Caco-2 (cell line): ENCODE measurements at regions of chr5 and their contacts with region 1.

Region 1: DNA sequence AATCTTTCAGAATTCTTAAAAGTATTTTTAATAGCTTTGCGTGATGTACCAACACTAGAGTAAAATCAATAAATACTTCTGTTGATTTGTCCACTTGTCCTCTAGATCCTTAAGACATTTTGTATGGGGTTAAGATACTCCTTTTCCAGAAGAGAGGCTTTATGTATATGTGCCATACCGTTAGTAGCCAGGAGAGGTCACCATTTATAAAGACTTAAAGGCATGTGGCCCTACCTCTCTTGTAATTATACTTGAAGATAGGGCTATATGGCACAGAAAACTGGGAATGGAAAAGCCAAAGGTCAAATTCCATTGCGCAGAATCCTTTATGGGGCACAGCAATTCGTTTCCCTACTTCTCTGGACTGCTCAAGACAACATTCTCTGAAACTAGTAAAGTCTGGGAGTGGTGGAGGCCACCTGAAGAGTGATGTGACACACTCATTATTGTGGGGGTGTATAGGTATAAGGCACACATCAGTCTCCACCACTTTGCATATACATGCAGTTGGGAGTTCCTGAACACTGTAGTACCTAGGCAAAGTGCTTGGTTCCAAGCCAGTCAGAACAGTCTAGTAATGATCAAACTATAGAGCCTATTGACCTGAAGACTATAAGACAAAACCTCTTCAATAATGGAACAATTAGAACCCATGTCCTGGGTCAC is 140.1 kb upstream of the FBXL17 start:
- DNase-seq: peak in 1 of 2 experiments; percentile 66
- H3K4me3 ChIP-seq: no peak overlapping the region
- H3K4me3 Mint-ChIP-seq: no peak overlapping the region
- H3K27ac Mint-ChIP-seq: no peak overlapping the region
- H3K4me1 ChIP-seq: peaks cover 8% of the 10 kb centered on the region
- H3K4me1 Mint-ChIP-seq: peaks cover 12% of the 10 kb centered on the region
- H3K27me3 ChIP-seq: no peaks in the 10 kb centered on the region
- H3K27me3 Mint-ChIP-seq: no peaks in the 10 kb centered on the region
- CTCF ChIP-seq: peak; percentile 71

Region 2: DNA sequence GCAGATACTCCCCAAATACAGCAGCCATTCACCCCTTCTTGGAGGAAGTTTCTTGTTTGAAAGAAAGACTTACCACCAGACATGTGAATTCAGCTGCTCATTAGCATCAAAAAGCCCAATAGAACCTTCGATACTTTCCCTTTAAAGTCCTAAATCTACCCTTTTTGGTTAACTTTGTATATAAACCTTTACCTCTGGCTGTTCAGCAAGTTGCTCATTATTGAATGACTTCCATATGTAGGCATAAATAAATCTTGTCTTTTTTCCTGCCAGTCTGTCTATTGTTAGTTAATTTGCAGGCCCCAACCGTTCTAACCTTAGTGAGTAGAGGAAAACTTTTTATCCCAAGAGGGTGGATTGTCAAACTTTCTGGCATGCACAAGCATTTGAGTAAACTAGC is 112.2 kb before region 1 on chr5:
- CTCF ChIA-PET with region 1: interaction called, 10 read pairs
- POLR2A ChIA-PET with region 1: no interaction called
- intact Hi-C with region 1: no loop called
- DNase-seq: no peak
- H3K4me3 ChIP-seq: no peak overlapping the region
- H3K4me3 Mint-ChIP-seq: no peak overlapping the region
- H3K27ac Mint-ChIP-seq: no peak overlapping the region
- H3K4me1 ChIP-seq: no peaks in the 10 kb centered on the region
- H3K4me1 Mint-ChIP-seq: no peaks in the 10 kb centered on the region
- H3K27me3 ChIP-seq: no peaks in the 10 kb centered on the region
- H3K27me3 Mint-ChIP-seq: no peaks in the 10 kb centered on the region
- CTCF ChIP-seq: no peak

Region 3: DNA sequence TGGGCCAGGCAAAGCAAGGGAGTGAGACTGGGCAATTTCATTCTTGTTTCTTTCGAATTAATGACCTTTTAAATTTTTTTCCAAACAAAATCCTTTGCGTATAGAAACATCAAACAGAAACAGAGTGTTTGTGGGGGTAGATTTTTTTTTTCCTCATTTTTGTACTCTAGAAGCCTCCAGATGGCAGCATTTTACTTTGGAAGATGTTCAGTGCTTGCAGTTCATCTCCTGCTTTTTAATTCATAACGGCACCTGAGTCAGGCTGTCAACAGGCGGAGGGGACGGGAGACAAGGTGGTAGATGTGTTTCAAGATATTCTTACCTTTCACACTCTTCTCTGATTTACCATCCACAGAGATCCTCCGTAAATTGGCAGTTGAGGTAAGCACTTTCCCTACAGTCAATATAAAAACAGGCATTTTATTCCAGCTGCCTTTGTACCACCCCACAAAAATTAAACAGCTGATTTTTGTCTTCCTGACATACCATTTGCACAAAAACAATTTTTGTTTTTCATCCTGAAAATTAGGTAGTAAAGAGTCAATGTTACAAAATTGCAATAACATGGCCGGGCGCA is 40.5 kb before region 1 on chr5:
- CTCF ChIA-PET with region 1: no interaction called
- POLR2A ChIA-PET with region 1: no interaction called
- intact Hi-C with region 1: loop called (anchors 1 kb)
- DNase-seq: peak; percentile 35 to 51
- H3K4me3 ChIP-seq: no peak overlapping the region
- H3K4me3 Mint-ChIP-seq: no peak overlapping the region
- H3K27ac Mint-ChIP-seq: no peak overlapping the region
- H3K4me1 ChIP-seq: no peaks in the 10 kb centered on the region
- H3K4me1 Mint-ChIP-seq: no peaks in the 10 kb centered on the region
- H3K27me3 ChIP-seq: no peaks in the 10 kb centered on the region
- H3K27me3 Mint-ChIP-seq: peaks cover 10% of the 10 kb centered on the region
- CTCF ChIP-seq: peak; percentile 44 to 51

Region 4: DNA sequence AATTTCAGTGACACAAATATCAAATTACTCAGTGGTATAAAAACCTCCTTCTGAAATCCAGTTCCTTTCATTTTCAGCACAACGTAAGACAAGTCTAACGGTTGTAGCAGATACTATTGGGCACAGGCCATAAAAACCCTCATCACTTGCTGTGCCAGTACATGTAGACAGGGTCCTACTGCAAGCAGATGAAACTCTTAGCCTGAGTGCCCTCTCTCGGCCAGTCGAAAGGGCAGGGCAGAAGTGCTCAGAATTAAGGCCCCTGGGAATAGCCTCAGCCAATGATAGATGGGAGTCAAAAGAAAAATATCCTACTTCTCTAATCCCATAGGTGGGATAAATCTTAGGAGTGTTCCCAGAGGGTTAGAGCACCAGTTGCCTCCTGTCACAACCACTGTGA is 57.3 kb after region 1 on chr5:
- CTCF ChIA-PET with region 1: no interaction called
- POLR2A ChIA-PET with region 1: no interaction called
- intact Hi-C with region 1: loop called (anchors 5 kb)
- DNase-seq: no peak
- H3K4me3 ChIP-seq: no peak overlapping the region
- H3K4me3 Mint-ChIP-seq: no peak overlapping the region
- H3K27ac Mint-ChIP-seq: no peak overlapping the region
- H3K4me1 ChIP-seq: no peaks in the 10 kb centered on the region
- H3K4me1 Mint-ChIP-seq: no peaks in the 10 kb centered on the region
- H3K27me3 ChIP-seq: no peaks in the 10 kb centered on the region
- H3K27me3 Mint-ChIP-seq: no peaks in the 10 kb centered on the region
- CTCF ChIP-seq: no peak

Region 5: DNA sequence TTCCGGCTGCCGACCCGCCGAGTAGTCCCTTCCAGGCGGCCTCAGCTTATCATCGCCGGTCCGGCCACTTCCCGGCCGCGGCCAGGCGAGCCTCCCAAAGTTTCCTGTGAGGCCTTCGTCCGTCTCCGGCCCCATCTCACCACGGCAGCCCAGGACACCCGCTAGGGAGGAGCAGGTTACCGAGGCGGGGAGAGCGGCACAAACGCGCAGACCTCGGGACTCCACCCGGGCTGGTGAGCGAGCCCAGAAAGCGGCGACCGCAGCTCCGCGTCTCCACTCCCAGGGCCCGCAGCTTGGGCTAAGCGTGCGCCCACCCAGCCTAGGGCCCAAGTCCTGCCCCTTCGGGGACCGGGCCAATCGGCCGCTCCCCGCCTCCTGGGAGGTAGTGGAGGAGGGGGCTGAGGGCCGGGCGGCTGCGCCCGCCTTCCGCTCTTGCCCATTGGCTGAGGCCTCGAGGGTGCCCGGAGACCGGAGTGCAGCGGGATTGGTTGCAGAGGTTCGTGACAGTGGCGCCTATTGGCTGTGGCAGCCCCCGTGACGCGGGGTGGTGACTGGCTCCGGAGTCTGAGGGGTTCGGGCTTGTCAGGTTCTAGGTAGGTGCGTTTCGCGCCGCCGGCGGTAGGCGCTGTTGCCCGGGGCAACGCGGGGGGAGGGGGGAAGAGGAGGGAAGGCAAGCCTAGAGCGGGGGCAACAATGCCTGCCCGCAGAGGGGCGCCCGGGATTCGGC is 226.6 kb after region 1 on chr5:
- CTCF ChIA-PET with region 1: no interaction called
- POLR2A ChIA-PET with region 1: no interaction called
- intact Hi-C with region 1: loop called (anchors 5 kb)
- DNase-seq: peak; percentile 99 to 100
- H3K4me3 ChIP-seq: peak overlapping the region; percentile 98
- H3K4me3 Mint-ChIP-seq: peak overlapping the region; percentile 90
- H3K27ac Mint-ChIP-seq: peak overlapping the region; percentile 93
- H3K4me1 ChIP-seq: peaks cover 24% of the 10 kb centered on the region
- H3K4me1 Mint-ChIP-seq: peaks cover 23% of the 10 kb centered on the region
- H3K27me3 ChIP-seq: no peaks in the 10 kb centered on the region
- H3K27me3 Mint-ChIP-seq: no peaks in the 10 kb centered on the region
- CTCF ChIP-seq: no peak